ENCODE measurements at regions of chr22 and their contacts with region 1.

Region 1: DNA sequence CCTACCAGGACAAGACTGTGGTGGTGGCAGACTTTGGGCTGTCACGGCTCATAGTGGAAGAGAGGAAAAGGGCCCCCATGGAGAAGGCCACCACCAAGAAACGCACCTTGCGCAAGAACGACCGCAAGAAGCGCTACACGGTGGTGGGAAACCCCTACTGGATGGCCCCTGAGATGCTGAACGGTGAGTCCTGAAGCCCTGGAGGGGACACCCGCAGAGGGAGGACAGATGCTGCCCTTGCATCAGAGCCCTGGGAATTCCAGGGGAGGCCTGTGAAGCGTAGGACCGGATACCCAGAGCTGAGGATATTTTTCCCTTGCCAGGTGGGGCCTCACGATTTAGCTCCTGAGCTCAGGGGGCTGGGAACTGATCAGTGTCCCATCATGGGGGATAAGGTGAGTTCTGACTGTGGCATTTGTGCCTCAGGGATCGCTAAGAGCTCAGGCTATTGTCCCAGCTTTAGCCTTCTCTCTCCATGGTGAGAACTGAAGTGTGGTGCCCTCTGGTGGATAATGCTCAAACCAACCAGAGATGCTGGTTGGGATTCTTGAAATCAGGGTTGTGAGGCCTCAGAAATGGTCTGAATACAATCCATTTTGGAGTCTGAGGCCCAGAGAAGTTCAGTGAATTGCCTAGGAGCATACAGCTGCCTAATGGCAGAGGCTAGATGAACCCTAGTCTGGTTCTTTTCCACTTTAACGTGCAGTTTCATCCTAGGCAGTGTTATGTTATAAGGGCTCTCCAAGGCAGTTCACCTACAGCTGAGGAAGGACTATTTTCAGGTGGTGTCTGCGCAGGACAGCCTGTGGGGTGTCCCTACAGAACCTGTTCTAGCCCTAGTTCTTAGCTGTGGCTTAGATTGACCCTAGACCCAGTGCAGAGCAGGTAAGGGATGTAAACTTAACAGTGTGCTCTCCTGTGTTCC is 19.5 kb downstream of the PIK3IP1 start:
- DNase-seq: no peak
- H3K4me3 ChIP-seq: no peak overlapping the region
- CTCF ChIP-seq: peak; percentile 74

Region 2: GRCh38 chr22:31206906-31207678 is 65.7 kb before region 1 on chr22:
- CTCF ChIA-PET with region 1: interaction called, 170 read pairs
- POLR2A ChIA-PET with region 1: no interaction called
- DNase-seq: no peak
- H3K4me3 ChIP-seq: no peak overlapping the region
- CTCF ChIP-seq: no peak

Region 3: DNA sequence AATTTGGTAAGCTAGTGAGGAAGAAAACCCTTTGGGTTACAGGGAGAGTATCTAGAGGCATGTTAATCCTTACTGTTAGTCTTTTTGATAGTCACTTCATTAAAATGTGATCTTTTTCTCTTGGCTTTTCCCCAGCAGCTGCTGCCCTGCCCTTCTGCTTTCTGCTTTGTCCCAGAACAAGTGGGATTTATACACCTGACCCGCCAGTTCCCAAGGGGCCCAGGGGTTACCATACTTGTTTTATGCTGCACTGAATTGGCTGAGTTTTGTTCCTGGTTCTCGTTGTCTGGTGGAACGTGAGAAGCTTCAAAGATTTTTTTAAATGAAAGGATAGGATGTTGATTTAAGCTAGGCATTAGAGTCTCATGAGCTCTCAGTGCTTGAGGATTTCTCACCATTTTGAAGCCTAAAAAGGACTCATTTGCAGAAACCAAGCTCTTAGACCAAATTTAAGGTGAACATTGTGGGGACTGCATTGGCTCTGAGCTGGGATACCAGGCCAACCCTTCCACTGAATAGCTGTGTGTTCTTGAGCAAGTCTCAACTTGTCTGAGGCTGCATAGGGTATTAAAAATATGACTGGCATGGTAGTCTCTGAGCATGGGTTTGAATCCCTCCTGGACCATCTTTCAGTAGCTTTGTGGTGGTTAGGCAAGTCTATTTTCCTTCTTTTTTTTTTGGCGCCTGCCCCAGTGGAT is 54.1 kb before region 1 on chr22:
- CTCF ChIA-PET with region 1: interaction called, 170 read pairs
- POLR2A ChIA-PET with region 1: no interaction called
- DNase-seq: no peak
- H3K4me3 ChIP-seq: no peak overlapping the region
- CTCF ChIP-seq: no peak

Region 4: GRCh38 chr22:31241200-31241599 is 31.6 kb before region 1 on chr22:
- CTCF ChIA-PET with region 1: interaction called, 285 read pairs
- POLR2A ChIA-PET with region 1: no interaction called
- DNase-seq: no peak
- H3K4me3 ChIP-seq: no peak overlapping the region
- CTCF ChIP-seq: no peak

Region 5: DNA sequence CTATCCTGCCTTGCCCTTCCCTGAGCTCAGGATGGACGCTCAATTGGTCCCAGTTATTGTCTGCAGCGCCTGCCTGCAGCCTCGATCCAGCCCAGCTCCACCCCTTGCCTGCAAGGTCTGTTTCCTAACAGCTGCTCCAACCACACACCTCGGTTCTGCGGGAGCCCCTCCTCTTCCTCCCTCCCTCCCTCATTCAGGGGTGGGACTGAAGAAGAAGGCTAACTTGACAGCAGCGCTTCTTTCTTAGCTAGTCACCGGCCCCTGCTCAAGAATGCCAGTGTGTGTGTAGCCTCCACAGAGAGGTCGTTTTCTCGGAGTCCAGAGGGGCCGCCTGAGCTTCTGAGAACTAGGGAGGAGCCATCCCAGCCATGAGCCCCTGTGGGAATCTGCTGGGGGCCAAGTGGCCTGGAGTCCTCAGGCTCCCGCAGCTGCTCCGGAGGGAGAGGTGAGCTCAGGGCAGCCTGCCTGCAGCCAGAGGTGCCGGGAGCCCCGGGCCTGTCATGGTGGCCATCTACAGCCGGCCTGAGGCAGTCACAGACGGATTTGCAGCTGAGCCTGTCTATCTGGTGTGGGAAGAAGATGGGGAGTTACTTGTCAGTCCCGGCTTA is 24.5 kb before region 1 on chr22:
- CTCF ChIA-PET with region 1: interaction called, 285 read pairs
- POLR2A ChIA-PET with region 1: interaction called, 3 read pairs
- DNase-seq: peak; percentile 74
- H3K4me3 ChIP-seq: peak overlapping the region; percentile 72
- CTCF ChIP-seq: no peak

Region 6: DNA sequence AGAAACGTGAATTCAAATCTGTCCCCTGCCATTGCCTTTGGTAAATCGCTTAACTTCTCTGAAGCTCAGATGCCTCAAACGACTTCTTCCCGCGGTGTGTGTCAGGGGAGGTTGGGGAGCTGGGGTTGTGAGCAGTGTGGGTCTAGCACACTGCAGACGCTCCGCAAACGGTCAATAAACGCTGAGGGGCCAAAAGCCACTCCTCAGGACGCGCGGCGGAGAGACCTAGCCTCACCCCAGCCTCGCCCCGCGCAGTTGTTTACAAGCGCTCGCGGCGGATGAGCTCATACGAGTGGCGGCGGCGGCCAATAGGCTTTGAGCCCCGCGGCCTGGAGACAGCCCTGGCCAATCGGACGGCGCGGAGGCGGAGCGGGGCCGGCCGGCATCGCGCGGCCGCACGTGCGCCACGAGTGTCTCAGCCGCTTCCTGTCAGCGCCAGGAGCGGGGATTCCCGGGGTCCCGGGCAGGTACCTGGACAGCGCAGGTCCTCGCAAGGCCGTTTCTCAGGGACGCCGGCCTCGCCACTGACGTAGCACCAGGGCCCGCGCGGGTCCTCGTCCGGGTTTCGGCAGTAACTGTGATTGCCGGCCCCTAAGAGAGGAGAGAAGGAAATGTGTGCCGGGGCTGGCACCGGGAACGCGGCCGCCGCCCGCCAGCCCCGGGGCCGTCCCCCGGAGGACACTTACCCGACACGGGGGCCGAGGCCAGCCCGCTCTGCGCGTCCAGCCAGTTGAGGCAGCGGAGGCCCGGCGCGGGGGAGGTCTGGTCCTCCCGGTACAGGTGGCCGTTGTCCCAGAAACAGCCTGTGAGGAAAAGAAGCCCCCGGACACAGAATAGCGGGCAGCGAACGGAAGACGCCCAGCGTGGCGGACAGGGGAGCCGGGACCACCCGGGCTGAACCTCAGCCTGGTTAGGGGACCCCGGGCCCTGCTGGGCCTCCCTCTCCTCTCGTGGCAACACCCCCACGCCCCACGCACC is 18.0 kb after region 1 on chr22:
- CTCF ChIA-PET with region 1: interaction called, 103 read pairs
- POLR2A ChIA-PET with region 1: no interaction called
- DNase-seq: no peak
- H3K4me3 ChIP-seq: peak overlapping the region; percentile 56
- CTCF ChIP-seq: no peak

Region 7: DNA sequence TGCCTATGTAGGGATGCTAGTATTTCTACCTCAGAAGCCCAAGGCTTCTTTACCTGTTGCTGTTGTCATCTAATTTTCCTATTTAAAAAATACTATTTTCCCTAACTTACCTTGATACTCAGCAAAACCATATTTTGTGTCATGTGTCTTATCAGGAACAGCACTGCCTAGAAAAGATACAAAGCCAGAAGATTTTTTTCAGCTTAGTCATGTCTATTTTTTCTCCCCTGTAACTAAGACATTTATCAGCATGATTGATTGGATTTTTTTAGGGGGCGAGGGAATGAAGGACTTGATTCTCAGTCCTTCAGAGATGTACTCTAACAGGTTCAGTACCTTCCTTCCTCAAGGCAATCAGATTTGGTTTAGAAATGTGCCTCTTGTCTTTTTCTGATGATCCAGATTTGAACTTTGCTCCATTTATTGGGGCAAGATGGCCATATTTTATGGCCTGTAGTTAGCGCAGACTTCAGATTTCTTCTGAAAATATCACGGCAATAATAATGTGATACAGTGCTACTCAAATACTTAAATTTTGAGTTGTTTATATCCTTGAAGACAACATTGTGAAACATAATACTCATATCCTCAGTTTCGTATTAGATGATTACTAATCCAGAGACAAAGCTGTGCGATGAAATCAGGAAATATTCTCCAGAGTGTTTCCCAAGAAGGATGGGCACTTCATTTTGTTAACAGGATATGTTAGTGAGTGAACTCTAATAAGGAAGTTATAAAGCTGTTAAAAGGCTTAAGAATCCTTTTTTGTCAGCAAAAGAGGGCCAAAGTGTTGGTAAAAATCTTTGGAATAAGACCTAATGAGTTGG is 23.3 kb after region 1 on chr22:
- CTCF ChIA-PET with region 1: interaction called, 41 read pairs
- POLR2A ChIA-PET with region 1: no interaction called
- DNase-seq: no peak
- H3K4me3 ChIP-seq: no peak overlapping the region
- CTCF ChIP-seq: no peak

Region 8: GRCh38 chr22:31561238-31561887 is 288.6 kb after region 1 on chr22:
- CTCF ChIA-PET with region 1: no interaction called
- POLR2A ChIA-PET with region 1: no interaction called
- DNase-seq: no peak
- H3K4me3 ChIP-seq: no peak overlapping the region
- CTCF ChIP-seq: peak; percentile 98

Measured in AG04449 (cell line).